Dendritic cell treated with granulocyte-macrophage colony-stimulating factor and Interleukin-4, amounts not matched to agents 40 ng/mL and 50 ng/mL, for 4 days (primary cell): ENCODE measurements at regions of chr19 and their contacts with region 1.

Region 1: GRCh38 chr19:21328885-21329605 is at the start of gene ZNF708:
- H3K4me3 Mint-ChIP-seq: peak within 1 kb of the TSS; percentile 100
- H3K27ac Mint-ChIP-seq: peak within 1 kb of the TSS; percentile 100
- H3K4me1 Mint-ChIP-seq: peaks cover 22% of the 10 kb centered on the region
- H3K27me3 Mint-ChIP-seq: no peaks in the 10 kb centered on the region

Region 2: DNA sequence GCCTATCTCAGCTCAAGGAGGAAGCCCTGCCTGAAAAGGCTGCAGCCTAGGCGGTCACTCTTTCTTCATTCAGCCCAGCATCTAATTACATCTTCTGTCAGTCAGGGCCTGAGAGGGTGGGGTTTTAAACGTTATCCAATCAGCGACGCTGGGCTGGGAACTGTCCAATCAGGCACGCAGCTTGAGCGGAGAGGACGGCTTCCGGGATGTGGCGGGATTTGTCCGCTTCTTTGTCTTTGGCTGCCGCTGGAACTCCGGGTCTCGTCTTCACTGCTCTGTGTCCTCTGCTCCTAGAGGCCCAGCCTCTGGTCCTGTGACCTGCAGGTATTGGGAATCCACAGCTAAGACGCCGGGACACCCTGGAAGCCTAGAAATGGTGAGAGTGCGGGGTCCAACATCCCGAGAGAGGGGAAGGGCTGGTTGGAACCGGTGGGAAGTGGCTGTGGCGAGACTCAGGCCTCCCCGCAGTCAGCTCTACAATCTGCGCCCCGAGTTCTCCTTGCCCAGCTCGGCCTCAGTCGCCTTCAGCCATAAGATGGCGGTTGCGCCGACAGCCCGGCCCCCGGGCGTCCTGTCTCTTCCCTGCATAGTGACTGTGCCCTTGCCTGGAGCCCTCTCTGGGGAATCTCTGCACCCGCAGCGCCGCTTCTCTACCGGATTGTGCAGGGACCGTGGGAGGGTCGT is 29.9 kb after region 1 on chr19 and contains the start of gene ZNF738:
- intact Hi-C with region 1: loop called (anchors 1 kb)
- H3K4me3 Mint-ChIP-seq: peak within 1 kb of the TSS; percentile 100
- H3K27ac Mint-ChIP-seq: peak within 1 kb of the TSS; percentile 94
- H3K4me1 Mint-ChIP-seq: peaks cover 6% of the 10 kb centered on the region
- H3K27me3 Mint-ChIP-seq: no peaks in the 10 kb centered on the region

Region 3: DNA sequence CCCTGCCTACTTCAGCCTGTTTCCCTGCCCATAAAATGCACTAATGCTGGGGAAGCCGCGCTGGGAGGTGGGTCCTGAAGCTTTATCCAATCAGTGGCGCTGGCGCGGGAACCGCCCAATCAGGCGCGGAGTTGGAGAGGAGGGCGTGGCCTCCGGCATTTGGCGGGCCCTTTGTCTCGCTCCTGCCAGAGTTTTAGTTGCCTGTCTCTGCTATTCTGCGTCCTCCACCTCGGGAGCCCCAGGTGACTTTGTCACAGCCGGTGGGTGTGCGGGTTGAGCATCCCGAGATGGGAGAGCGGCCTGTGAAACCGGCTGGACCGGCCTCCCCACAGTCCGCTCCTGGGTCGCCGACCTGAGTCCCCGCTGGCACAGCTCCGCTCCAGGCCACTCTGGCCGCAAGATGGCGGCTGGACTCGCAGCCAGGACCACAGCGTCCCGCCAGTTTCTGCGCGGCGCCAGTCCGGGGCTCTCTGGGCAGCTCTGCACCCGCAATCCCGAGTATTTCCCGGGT is 145.7 kb after region 1 on chr19:
- intact Hi-C with region 1: no loop called
- H3K4me3 Mint-ChIP-seq: peak overlapping the region; percentile 87
- H3K27ac Mint-ChIP-seq: peak overlapping the region; percentile 37
- H3K4me1 Mint-ChIP-seq: no peaks in the 10 kb centered on the region
- H3K27me3 Mint-ChIP-seq: peaks cover 1% of the 10 kb centered on the region